K562 (cell line): ENCODE measurements at regions of chr1 and their contacts with region 1.

Region 1: DNA sequence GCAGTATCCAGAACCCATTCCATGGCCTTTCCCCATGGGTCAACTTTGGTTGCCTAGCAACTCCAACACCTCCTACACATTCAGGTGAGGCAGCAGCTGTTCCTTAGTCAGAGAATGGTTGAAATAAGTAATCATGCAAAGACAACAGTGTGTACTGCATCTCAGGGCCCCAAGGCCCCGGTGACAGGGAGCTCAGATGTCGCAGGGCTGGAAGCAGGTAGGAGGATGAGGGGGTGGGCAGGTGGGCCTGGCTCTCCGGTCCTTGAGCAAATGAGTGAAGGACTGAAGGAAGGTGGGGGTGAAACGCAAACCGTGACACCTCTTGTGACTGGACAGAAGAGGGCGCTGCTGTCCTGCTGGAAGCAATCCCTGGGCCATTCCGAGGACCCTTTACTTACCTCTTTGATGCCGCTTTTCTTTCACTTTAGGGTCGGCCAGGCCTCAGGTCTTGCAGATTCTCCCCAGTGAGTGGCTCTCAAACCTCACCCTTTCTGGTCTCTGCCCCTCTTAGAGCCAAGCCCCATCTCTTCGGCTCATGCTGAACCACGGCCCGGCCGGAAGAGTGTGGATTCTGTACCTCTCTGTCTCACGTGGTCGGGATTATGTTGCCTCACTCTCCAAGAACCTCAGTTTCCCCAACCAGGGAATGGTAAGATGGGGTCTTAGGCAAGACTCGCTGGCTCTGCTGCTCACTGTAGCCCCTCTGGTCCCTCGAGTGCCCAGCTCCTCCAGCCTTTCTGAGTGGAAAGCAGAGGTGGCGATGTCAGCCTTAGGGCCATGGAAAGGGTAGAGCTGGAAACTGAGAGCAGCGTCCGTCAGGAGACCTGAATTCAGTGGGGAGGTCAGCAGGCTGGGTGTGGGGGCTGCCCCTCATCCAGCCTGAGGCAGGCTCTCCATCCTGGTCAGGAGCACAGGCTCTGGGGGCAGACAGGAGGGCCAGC is 5.6 kb upstream of the KCNA10 start:
- DNase-seq: peak; percentile 70 to 90 (median 85)
- ATAC-seq: peak; percentile 97
- H3K4me3 ChIP-seq: no peak overlapping the region
- H3K27ac ChIP-seq: no peak overlapping the region
- H3K4me1 ChIP-seq: no peaks in the 10 kb centered on the region; a peak in 2 of 5 replicates
- H3K27me3 ChIP-seq: peaks cover 2 to 36% of the 10 kb centered on the region in 2 experiments; a peak in 3 of 5 replicates
- CTCF ChIP-seq: peak; percentile 89 to 95 (median 95)
- EP300 ChIP-seq: no peak
- POLR2A ChIP-seq: no peak
- RAD21 ChIP-seq: peak; percentile 74 to 94

Region 2: DNA sequence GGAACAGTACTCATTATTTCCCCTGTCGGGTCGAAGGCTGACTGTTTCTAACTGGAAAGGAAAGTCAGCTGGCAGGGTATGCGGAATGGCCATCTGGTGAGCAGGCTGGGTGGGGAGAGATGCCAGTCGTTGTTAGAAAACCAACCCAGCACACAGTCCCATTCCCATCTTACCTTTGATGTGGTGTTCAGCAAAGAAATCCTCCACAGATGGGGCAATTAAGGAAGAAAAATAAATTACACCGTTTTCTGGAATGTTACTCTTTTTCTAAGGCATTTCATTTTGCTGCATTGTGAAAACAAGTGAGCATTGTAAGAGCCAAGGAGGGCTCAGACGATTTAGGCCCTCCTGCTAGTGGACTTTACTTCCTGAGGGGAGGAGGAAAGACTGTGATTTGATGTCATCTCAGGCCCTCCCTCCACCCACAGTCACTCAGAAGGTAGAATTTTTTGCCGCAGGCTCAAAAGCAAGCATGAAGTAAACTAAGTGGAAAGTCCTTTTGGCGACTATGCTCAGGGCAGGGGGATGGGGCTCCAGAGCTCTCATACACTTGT is 133.8 kb before region 1 on chr1 and contains the start of gene SLC16A4:
- CTCF ChIA-PET with region 1: no interaction called
- POLR2A ChIA-PET with region 1: no interaction called
- in situ Hi-C with region 1: no loop called
- intact Hi-C with region 1: no loop called
- DNase-seq: no peak
- ATAC-seq: no peak; the same call in 2 of the 3 replicates
- H3K4me3 ChIP-seq: no peak within 1 kb of the TSS
- H3K27ac ChIP-seq: no peak within 1 kb of the TSS
- H3K4me1 ChIP-seq: no peaks in the 10 kb centered on the region
- H3K27me3 ChIP-seq: no peaks in the 10 kb centered on the region
- CTCF ChIP-seq: no peak
- EP300 ChIP-seq: no peak
- POLR2A ChIP-seq: no peak
- RAD21 ChIP-seq: no peak
- polyA plus RNA-seq, gene SLC16A4: 0.20 to 0.23 TPM

Region 3: GRCh38 chr1:110612065-110612751 is 87.6 kb after region 1 on chr1:
- CTCF ChIA-PET with region 1: interaction called, 17 read pairs
- POLR2A ChIA-PET with region 1: no interaction called
- in situ Hi-C with region 1: loop called (anchors 5 kb)
- intact Hi-C with region 1: loop called (anchors 1 kb)
- DNase-seq: no peak
- ATAC-seq: no peak
- H3K4me3 ChIP-seq: no peak overlapping the region
- H3K27ac ChIP-seq: no peak overlapping the region
- H3K4me1 ChIP-seq: peaks cover 7 to 16% of the 10 kb centered on the region in 2 experiments
- H3K27me3 ChIP-seq: peaks cover 21 to 34% of the 10 kb centered on the region in 2 experiments
- CTCF ChIP-seq: no peak
- EP300 ChIP-seq: no peak
- POLR2A ChIP-seq: no peak
- RAD21 ChIP-seq: no peak

Region 4: DNA sequence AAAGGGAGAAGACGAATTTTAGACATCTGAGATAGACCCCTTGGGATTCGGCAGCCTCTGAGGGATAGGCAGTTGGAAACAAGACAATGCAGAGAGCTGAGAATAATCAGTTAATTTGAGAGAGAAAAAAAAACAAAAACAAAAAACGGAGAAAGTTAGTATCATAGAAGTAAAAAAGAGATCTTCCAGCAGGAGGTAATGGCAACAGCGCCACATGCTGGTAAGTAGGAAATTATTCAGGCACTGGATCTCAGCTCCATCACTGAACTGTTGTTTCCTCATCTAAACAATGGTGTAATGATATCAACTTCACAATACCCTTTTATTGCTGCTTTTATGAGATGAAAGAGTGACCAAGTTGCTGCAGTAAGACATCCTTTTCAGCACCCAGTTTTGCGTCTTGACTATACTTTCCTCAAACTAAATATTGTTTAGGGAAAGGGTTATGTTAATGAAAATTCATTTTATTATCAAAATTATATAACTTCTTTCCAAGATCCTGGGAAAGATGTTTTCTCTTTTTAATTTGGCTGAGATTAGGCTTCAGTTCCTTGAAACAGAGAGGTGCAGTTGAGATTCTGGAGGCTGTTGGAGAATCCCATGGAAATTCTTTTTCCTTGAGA is 241.6 kb after region 1 on chr1:
- CTCF ChIA-PET with region 1: interaction called, 11 read pairs
- POLR2A ChIA-PET with region 1: no interaction called
- in situ Hi-C with region 1: no loop called
- intact Hi-C with region 1: loop called (anchors 5 kb)
- DNase-seq: peak; percentile 57 to 65 (median 58)
- ATAC-seq: peak; percentile 74; the same call in 2 of the 3 replicates
- H3K4me3 ChIP-seq: no peak overlapping the region
- H3K27ac ChIP-seq: no peak overlapping the region
- H3K4me1 ChIP-seq: no peaks in the 10 kb centered on the region
- H3K27me3 ChIP-seq: no peaks in the 10 kb centered on the region; a peak in 1 of 5 replicates
- CTCF ChIP-seq: peak; percentile 78 to 95 (median 80)
- EP300 ChIP-seq: no peak
- POLR2A ChIP-seq: no peak
- RAD21 ChIP-seq: peak; percentile 63 to 90